MCF 10A (cell line): ENCODE measurements at regions of chr3 and their contacts with region 1.

Region 1: GRCh38 chr3:150227839-150228238 is 180.3 kb upstream of the TSC22D2 start:
- DNase-seq: peak; percentile 74
- H3K4me3 Mint-ChIP-seq: no peak overlapping the region
- H3K27ac Mint-ChIP-seq: no peak overlapping the region
- H3K4me1 Mint-ChIP-seq: peaks cover under 1% of the 10 kb centered on the region
- H3K27me3 Mint-ChIP-seq: no peaks in the 10 kb centered on the region
- CTCF ChIP-seq: peak; percentile 67

Region 2: GRCh38 chr3:149969940-149970715 is 257.7 kb before region 1 on chr3:
- CTCF ChIA-PET with region 1: interaction called, 32 read pairs
- POLR2A ChIA-PET with region 1: interaction called, 3 read pairs
- intact Hi-C with region 1: no loop called
- DNase-seq: peak; percentile 80
- H3K4me3 Mint-ChIP-seq: peak overlapping the region; percentile 80
- H3K27ac Mint-ChIP-seq: peak overlapping the region; percentile 84
- H3K4me1 Mint-ChIP-seq: peaks cover 28% of the 10 kb centered on the region
- H3K27me3 Mint-ChIP-seq: no peaks in the 10 kb centered on the region
- CTCF ChIP-seq: no peak

Region 3: GRCh38 chr3:150238998-150239619 is 11.3 kb after region 1 on chr3:
- CTCF ChIA-PET with region 1: interaction called, 15 read pairs
- POLR2A ChIA-PET with region 1: interaction called, 3 read pairs
- intact Hi-C with region 1: no loop called
- DNase-seq: peak; percentile 60
- H3K4me3 Mint-ChIP-seq: no peak overlapping the region
- H3K27ac Mint-ChIP-seq: peak overlapping the region; percentile 83
- H3K4me1 Mint-ChIP-seq: peaks cover 27% of the 10 kb centered on the region
- H3K27me3 Mint-ChIP-seq: no peaks in the 10 kb centered on the region
- CTCF ChIP-seq: peak; percentile 32